K562 (cell line): ENCODE measurements at regions of chr9 and their contacts with region 1.

Region 1: GRCh38 chr9:14478175-14479162 is 164.5 kb upstream of the NFIB start:
- DNase-seq: no peak
- ATAC-seq: peak; percentile 87
- H3K4me3 ChIP-seq: no peak overlapping the region
- H3K27ac ChIP-seq: no peak overlapping the region; the same call in 2 of the 3 replicates
- H3K4me1 ChIP-seq: peaks cover 0 to 7% of the 10 kb centered on the region in 2 experiments; a peak in 3 of 5 replicates
- H3K27me3 ChIP-seq: no peaks in the 10 kb centered on the region
- CTCF ChIP-seq: peak in 1 of 3 experiments; percentile 27; a peak in 3 of 6 replicates
- EP300 ChIP-seq: peak; percentile 63
- POLR2A ChIP-seq: no peak
- RAD21 ChIP-seq: peak; percentile 44 to 77

Region 2: GRCh38 chr9:14428781-14429230 is 49.7 kb before region 1 on chr9:
- CTCF ChIA-PET with region 1: no interaction called
- POLR2A ChIA-PET with region 1: no interaction called
- in situ Hi-C with region 1: no loop called
- intact Hi-C with region 1: no loop called
- DNase-seq: peak; percentile 50 to 78 (median 58)
- ATAC-seq: peak; percentile 87
- H3K4me3 ChIP-seq: no peak overlapping the region
- H3K27ac ChIP-seq: no peak overlapping the region
- H3K4me1 ChIP-seq: peaks cover 0 to 19% of the 10 kb centered on the region in 2 experiments; a peak in 3 of 5 replicates
- H3K27me3 ChIP-seq: no peaks in the 10 kb centered on the region
- CTCF ChIP-seq: peak; percentile 56 to 76 (median 63)
- EP300 ChIP-seq: no peak
- POLR2A ChIP-seq: no peak
- RAD21 ChIP-seq: peak in 1 of 2 experiments; percentile 45; a peak in 2 of 4 replicates

Region 3: GRCh38 chr9:14524873-14525515 is 46.5 kb after region 1 on chr9:
- CTCF ChIA-PET with region 1: no interaction called
- POLR2A ChIA-PET with region 1: no interaction called
- in situ Hi-C with region 1: no loop called
- intact Hi-C with region 1: loop called (anchors 2 kb)
- DNase-seq: peak in 1 of 4 experiments; percentile 58
- ATAC-seq: peak; percentile 65
- H3K4me3 ChIP-seq: no peak overlapping the region
- H3K27ac ChIP-seq: peak overlapping the region; percentile 89
- H3K4me1 ChIP-seq: peaks cover 13 to 38% of the 10 kb centered on the region in 2 experiments; a peak in 4 of 5 replicates
- H3K27me3 ChIP-seq: no peaks in the 10 kb centered on the region
- CTCF ChIP-seq: no peak
- EP300 ChIP-seq: peak; percentile 30; the same call in 1 of the 2 replicates
- POLR2A ChIP-seq: no peak
- RAD21 ChIP-seq: no peak

Region 4: GRCh38 chr9:14530301-14530840 is 51.9 kb after region 1 on chr9:
- CTCF ChIA-PET with region 1: no interaction called
- POLR2A ChIA-PET with region 1: no interaction called
- in situ Hi-C with region 1: no loop called
- intact Hi-C with region 1: loop called (anchors 2 kb)
- DNase-seq: no peak
- ATAC-seq: peak; percentile 30
- H3K4me3 ChIP-seq: peak overlapping the region; percentile 32
- H3K27ac ChIP-seq: peak overlapping the region; percentile 88
- H3K4me1 ChIP-seq: peaks cover 15 to 32% of the 10 kb centered on the region in 2 experiments
- H3K27me3 ChIP-seq: no peaks in the 10 kb centered on the region
- CTCF ChIP-seq: no peak
- EP300 ChIP-seq: no peak
- POLR2A ChIP-seq: no peak
- RAD21 ChIP-seq: no peak

Region 5: DNA sequence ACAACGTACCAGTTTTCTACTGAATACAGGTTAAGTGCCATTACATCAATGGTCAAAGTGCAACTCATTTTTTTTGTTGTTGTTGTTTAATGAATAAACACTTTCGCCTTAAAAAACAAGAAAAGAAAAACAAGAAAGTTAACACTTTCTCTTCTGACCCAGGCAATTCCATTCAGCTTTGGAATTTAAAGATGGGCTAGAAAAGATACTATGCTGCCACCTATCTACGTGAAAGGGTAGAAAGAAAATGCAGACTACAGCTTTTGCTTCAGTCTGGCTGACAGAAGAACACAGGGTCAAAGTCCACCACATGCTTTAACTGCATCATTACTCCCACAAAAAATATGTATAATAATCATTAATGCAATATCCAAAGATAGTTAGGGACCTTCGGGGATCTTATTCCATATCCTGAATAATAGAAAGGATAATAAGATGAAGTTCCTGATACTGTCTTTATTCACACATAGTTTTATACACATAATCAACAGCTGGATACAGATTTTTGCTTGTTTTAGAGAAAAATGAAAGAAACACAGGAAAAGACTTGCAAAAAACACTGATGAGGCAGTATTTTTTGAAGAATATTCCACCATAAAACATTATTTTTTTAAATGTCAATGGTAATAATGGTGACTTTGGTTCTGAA is 174.4 kb after region 1 on chr9:
- CTCF ChIA-PET with region 1: no interaction called
- POLR2A ChIA-PET with region 1: no interaction called
- in situ Hi-C with region 1: no loop called
- intact Hi-C with region 1: loop called (anchors 1 kb)
- DNase-seq: peak in 3 of 4 experiments; percentile 4 to 25 (median 11)
- ATAC-seq: peak; percentile 74
- H3K4me3 ChIP-seq: no peak overlapping the region
- H3K27ac ChIP-seq: no peak overlapping the region
- H3K4me1 ChIP-seq: no peaks in the 10 kb centered on the region
- H3K27me3 ChIP-seq: no peaks in the 10 kb centered on the region
- CTCF ChIP-seq: peak; percentile 35 to 55 (median 43); a peak in 4 of 6 replicates
- EP300 ChIP-seq: no peak
- POLR2A ChIP-seq: no peak
- RAD21 ChIP-seq: peak; percentile 56 to 82